H1 (cell line): ENCODE measurements at regions of chr7 and their contacts with region 1.

Region 1: DNA sequence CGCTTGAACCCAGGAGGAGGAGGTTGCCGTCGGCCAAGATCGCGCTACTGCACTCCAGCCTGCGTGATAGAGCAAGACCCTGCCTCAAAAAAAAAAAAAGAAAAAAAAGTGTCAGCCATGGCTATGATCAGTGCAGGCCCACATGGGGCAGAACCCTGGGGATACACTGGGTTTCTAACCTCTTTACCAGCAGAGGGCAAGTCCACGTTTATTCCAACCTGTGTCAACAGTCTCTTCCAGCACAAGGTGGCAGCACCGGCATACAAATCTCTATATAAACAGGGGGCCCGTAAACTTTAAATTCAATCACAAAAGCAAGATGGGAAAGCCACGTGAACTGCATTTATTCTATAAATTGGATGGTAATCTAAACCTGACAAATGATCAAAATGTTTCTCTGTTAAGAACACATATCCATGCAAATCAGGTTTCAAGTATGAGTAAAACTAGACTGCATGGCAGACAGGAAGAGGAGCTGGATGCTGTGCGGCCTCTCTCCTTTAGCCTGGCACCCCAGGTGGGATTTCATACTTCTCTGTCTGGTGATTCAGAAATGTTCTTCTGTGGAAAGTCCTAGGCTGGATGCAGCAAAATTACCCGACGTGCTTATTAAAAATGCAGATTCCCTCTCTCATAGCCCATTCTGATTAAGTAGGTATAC is 60.0 kb upstream of the STEAP1B start:
- DNase-seq: peak in 1 of 2 experiments; percentile 73
- H3K4me3 ChIP-seq: no peak overlapping the region
- H3K27ac ChIP-seq: no peak overlapping the region
- H3K4me1 ChIP-seq: peaks cover 8 to 34% (median 25%) of the 10 kb centered on the region in 4 experiments
- H3K27me3 ChIP-seq: no peaks in the 10 kb centered on the region
- CTCF ChIP-seq: peak; percentile 63 to 99 (median 91)
- EP300 ChIP-seq: no peak
- POLR2A ChIP-seq: no peak
- RAD21 ChIP-seq: peak; percentile 94 to 98

Region 2: DNA sequence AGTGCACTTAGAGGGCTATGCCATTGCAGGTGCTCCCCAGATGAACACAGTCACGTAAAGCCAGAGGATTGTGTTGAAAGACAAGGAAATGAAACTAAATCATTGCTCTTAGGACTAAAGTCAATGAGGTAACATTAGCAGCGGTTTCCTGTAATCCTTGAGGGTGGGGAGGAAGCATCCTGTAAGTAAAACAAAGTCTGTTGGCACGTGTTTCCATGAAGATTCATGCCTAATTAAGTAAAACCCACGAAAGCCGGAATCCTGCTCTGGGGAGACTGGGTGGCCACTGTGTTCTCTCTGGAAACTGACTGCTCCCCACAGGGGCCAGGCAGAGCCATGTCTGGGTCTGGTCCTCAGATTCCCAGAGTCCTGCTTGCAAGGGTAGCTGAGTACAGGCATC is 78.2 kb before region 1 on chr7:
- CTCF ChIA-PET with region 1: no interaction called
- POLR2A ChIA-PET with region 1: no interaction called
- DNase-seq: no peak
- H3K4me3 ChIP-seq: no peak overlapping the region
- H3K27ac ChIP-seq: no peak overlapping the region
- H3K4me1 ChIP-seq: no peaks in the 10 kb centered on the region
- H3K27me3 ChIP-seq: no peaks in the 10 kb centered on the region
- CTCF ChIP-seq: no peak
- EP300 ChIP-seq: no peak
- POLR2A ChIP-seq: no peak
- RAD21 ChIP-seq: no peak

Region 3: GRCh38 chr7:22577396-22578001 is 17.5 kb after region 1 on chr7:
- CTCF ChIA-PET with region 1: interaction called, 100 read pairs
- POLR2A ChIA-PET with region 1: interaction called, 12 read pairs
- DNase-seq: no peak
- H3K4me3 ChIP-seq: no peak overlapping the region
- H3K27ac ChIP-seq: no peak overlapping the region
- H3K4me1 ChIP-seq: peaks cover 0 to under 1% (median 0%) of the 10 kb centered on the region in 4 experiments; a peak in 1 of 7 replicates
- H3K27me3 ChIP-seq: no peaks in the 10 kb centered on the region
- CTCF ChIP-seq: no peak
- EP300 ChIP-seq: no peak
- POLR2A ChIP-seq: no peak
- RAD21 ChIP-seq: no peak

Region 4: GRCh38 chr7:22660732-22661131 is 100.8 kb after region 1 on chr7:
- CTCF ChIA-PET with region 1: interaction called, 23 read pairs
- POLR2A ChIA-PET with region 1: interaction called, 3 read pairs
- DNase-seq: no peak
- H3K4me3 ChIP-seq: no peak overlapping the region
- H3K27ac ChIP-seq: no peak overlapping the region
- H3K4me1 ChIP-seq: peaks cover 0 to 3% (median 0%) of the 10 kb centered on the region in 4 experiments; a peak in 1 of 7 replicates
- H3K27me3 ChIP-seq: no peaks in the 10 kb centered on the region
- CTCF ChIP-seq: peak; percentile 74 to 90 (median 86)
- EP300 ChIP-seq: no peak
- POLR2A ChIP-seq: no peak
- RAD21 ChIP-seq: peak; percentile 40 to 66

Region 5: GRCh38 chr7:22718200-22718711 is 158.3 kb after region 1 on chr7:
- CTCF ChIA-PET with region 1: interaction called, 385 read pairs
- POLR2A ChIA-PET with region 1: interaction called, 52 read pairs
- DNase-seq: no peak
- H3K4me3 ChIP-seq: no peak overlapping the region
- H3K27ac ChIP-seq: no peak overlapping the region
- H3K4me1 ChIP-seq: peaks cover 0 to 2% (median 0%) of the 10 kb centered on the region in 4 experiments; a peak in 1 of 7 replicates
- H3K27me3 ChIP-seq: no peaks in the 10 kb centered on the region
- CTCF ChIP-seq: no peak
- EP300 ChIP-seq: no peak
- POLR2A ChIP-seq: no peak
- RAD21 ChIP-seq: no peak

Region 6: DNA sequence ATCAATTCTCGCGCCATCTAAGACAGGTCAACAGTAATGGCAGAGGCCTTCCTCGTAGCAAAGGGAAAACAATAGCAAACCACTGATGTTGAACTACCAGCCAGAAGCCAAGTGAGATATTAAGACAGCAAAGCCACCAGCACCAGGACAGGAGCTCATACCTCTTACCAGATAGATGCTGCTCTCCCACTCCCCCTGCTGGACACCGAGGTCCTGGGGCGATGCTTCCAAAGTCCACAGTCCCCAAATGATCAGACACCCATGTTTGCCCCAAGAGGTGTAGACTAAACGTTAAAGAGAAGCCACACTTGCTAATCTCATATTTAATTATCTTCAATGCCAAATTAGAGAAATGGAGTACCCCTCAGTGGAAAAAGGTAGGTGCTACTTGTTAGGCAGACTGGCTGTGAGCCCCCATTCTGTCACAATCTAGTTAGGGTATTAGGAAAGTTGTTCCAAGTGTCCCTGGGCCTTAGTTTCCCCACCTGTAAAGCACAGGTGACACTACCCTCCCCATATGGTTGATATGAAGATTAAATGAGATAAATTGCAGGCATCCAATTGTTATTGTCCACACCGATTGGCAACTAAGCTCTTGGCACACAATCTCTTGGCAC is 222.8 kb after region 1 on chr7:
- CTCF ChIA-PET with region 1: interaction called, 41 read pairs
- POLR2A ChIA-PET with region 1: no interaction called
- DNase-seq: peak in 1 of 2 experiments; percentile 88
- H3K4me3 ChIP-seq: no peak overlapping the region
- H3K27ac ChIP-seq: no peak overlapping the region
- H3K4me1 ChIP-seq: no peaks in the 10 kb centered on the region
- H3K27me3 ChIP-seq: no peaks in the 10 kb centered on the region
- CTCF ChIP-seq: peak; percentile 84 to 97 (median 94)
- EP300 ChIP-seq: no peak
- POLR2A ChIP-seq: no peak
- RAD21 ChIP-seq: peak; percentile 76 to 84

Region 7: DNA sequence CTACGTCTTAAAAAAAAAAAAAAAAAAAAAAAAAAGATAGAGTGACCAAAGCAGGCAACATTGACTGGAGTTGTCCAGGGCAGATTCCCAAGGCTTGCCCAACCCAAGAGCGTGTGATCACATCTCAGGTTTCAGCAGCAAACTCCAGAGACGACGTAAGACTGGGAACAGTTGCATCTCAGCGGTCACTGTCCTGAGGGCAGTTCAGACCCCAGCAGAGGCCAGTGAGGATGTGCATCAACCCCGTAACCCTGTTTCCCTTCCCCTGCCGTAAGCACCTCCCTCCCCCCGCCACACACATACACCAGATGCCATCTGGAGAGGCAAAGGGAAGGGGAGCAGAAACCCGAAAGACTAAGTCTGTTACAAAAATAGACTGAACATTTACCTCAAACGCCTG is 282.0 kb after region 1 on chr7:
- CTCF ChIA-PET with region 1: no interaction called
- POLR2A ChIA-PET with region 1: no interaction called
- DNase-seq: no peak
- H3K4me3 ChIP-seq: no peak overlapping the region
- H3K27ac ChIP-seq: no peak overlapping the region
- H3K4me1 ChIP-seq: peaks cover 6 to 7% (median 6%) of the 10 kb centered on the region in 4 experiments; a peak in 6 of 7 replicates
- H3K27me3 ChIP-seq: no peaks in the 10 kb centered on the region
- CTCF ChIP-seq: no peak
- EP300 ChIP-seq: no peak
- POLR2A ChIP-seq: no peak
- RAD21 ChIP-seq: no peak

Region 8: DNA sequence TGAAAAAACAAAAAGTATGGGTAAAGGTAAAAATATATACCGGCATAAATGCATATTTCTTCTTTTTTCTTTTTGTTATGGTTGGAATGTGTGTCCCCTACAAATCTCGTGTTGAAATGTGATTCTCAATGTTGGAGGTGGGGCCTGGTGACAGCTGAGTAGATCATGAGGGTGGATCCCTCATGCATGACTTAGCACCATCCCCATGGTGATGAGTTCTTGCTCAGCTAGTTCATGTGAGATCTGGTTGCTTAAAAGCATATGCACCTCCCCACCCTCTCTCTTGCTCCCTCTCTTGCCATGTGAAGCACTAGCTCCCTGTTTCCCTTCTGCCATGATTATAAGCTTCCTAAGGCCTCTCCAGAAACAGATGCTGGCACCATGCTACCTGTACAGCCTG is 360.7 kb after region 1 on chr7:
- CTCF ChIA-PET with region 1: no interaction called
- POLR2A ChIA-PET with region 1: no interaction called
- DNase-seq: no peak
- H3K4me3 ChIP-seq: no peak overlapping the region
- H3K27ac ChIP-seq: no peak overlapping the region
- H3K4me1 ChIP-seq: no peaks in the 10 kb centered on the region
- H3K27me3 ChIP-seq: no peaks in the 10 kb centered on the region
- CTCF ChIP-seq: no peak
- EP300 ChIP-seq: no peak
- POLR2A ChIP-seq: no peak
- RAD21 ChIP-seq: no peak

Region 9: DNA sequence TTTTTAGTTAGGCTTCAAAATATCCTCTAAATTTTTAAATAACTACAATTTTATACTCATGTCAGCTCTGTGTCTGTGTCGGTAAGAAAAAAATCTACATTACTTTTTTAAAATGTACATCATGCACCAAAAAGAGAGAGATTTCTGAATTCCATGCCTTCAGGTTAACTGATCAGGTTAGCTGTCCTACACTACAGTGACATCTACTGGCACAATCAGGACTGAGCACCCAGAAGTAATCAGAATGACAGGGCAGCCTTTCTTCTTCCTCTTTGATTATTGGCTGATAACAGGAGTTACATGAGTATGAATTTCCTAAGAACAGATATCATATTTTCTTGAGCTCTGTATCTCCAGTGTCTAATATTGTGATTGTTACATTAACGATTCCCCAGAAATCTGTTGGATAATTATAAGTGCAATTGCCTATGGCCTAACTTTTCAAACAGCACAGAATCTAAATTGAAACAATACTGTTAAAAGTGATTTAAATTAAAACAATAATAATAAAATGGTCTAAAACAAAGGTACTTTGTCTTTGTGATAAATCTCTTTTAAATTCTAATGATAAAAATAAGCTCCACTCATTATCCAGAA is 495.7 kb after region 1 on chr7:
- CTCF ChIA-PET with region 1: interaction called, 33 read pairs
- POLR2A ChIA-PET with region 1: no interaction called
- DNase-seq: no peak
- H3K4me3 ChIP-seq: no peak overlapping the region
- H3K27ac ChIP-seq: no peak overlapping the region
- H3K4me1 ChIP-seq: no peaks in the 10 kb centered on the region
- H3K27me3 ChIP-seq: no peaks in the 10 kb centered on the region
- CTCF ChIP-seq: peak in 2 of 3 experiments; percentile 78 to 83; a peak in 3 of 4 replicates
- EP300 ChIP-seq: no peak
- POLR2A ChIP-seq: no peak
- RAD21 ChIP-seq: peak; percentile 98